ENCODE measurements at regions of chr9 and their contacts with region 1.

Region 1: GRCh38 chr9:5949103-5949699 is 58.5 kb downstream of the MLANA start:
- H3K4me3 ChIP-seq: no peak overlapping the region
- H3K27ac ChIP-seq: no peak overlapping the region
- H3K4me1 ChIP-seq: peaks cover 9% of the 10 kb centered on the region; the same call in 1 of the 2 replicates
- CTCF ChIP-seq: no peak

Region 2: DNA sequence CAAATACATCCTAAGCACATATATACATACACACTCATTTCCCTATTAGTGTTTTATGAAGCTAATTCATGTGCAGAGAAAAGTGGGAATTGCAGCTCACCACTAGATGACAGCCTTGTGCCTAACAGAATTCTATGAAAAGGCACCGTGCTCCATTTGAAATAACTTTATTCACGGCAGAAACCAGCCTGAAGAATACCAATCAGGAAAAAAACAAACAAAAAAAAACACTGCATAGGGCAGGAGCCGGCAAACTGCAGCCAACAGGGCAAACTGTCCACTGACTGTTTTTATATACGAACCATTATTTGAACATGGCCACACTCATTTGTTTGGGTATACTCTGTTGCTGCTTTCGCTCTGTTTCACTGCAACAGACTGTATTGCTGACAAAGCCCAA is 149.9 kb before region 1 on chr9:
- CTCF ChIA-PET with region 1: interaction called, 11 read pairs
- POLR2A ChIA-PET with region 1: no interaction called
- H3K4me3 ChIP-seq: no peak overlapping the region
- H3K27ac ChIP-seq: no peak overlapping the region
- H3K4me1 ChIP-seq: peaks cover 4% of the 10 kb centered on the region; the same call in 1 of the 2 replicates
- CTCF ChIP-seq: peak; percentile 49